ENCODE measurements at regions of chr2 and their contacts with region 1.

Region 1: GRCh38 chr2:218269899-218270720 is at the starts of genes AAMP and PNKD:
- DNase-seq: peak; percentile 100
- ATAC-seq: peak; percentile 92
- H3K4me3 Mint-ChIP-seq: peak within 1 kb of the TSS; percentile 82
- H3K27ac Mint-ChIP-seq: peak within 1 kb of the TSS; percentile 88
- H3K4me1 Mint-ChIP-seq: peaks cover 39% of the 10 kb centered on the region
- H3K27me3 Mint-ChIP-seq: no peaks in the 10 kb centered on the region
- total RNA-seq, gene AAMP: 49.5 to 61.4 TPM
- total RNA-seq, gene PNKD: 37.6 to 40.7 TPM

Region 2: DNA sequence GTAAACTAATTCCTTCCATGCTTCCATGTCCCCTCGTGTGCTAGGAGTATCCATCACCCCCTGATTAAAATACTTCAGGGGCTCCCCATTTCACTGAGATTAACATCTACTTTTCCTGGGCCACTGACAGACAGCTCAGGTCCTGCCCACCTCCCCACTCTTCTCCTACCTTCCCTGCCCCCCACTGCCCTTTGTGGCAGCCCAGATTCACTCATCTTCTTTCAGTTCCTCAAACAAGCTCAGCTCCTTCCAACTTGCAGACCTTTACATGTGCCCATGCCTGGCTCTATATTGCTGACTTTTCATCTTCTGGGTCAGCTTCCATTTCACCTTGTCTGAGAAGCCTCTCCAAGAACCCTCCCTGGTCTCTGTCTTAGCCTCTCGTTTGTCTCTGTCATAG is 189.0 kb before region 1 on chr2:
- CTCF ChIA-PET with region 1: no interaction called
- DNase-seq: no peak
- ATAC-seq: no peak
- H3K4me3 Mint-ChIP-seq: no peak overlapping the region
- H3K27ac Mint-ChIP-seq: no peak overlapping the region
- H3K4me1 Mint-ChIP-seq: peaks cover 2% of the 10 kb centered on the region
- H3K27me3 Mint-ChIP-seq: peaks cover 7% of the 10 kb centered on the region

Region 3: DNA sequence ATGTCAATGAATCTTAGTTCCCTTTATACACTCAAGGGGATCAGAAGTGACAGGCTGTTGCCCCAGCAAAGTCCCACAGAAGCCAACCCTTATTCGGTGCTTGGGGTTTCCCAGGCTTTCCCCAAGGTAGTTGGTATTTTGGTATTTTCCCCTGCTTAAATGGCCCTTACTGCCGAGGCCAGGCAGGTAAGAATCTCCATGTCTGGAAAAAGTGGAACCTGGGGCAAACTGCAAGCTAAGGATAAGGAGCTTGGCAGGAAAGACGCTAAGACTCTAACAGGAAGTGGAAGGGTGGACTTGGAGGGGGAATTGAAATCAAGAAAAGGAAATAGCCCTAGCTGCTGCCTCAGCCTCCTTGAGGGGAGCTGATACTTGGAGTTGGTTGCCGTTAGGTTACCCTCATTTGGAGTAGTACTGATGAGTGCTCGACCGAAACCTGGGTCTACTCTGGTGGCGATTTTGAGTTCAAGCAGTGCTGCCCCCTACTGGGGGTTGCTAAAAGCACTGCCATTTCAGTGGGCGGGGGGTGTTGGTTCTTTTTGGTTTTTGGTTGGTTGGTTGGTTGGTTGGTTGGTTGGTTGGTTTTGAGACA is 12.6 kb before region 1 on chr2:
- CTCF ChIA-PET with region 1: interaction called, 21 read pairs
- DNase-seq: peak; percentile 81
- ATAC-seq: peak; percentile 80
- H3K4me3 Mint-ChIP-seq: peak overlapping the region; percentile 8
- H3K27ac Mint-ChIP-seq: peak overlapping the region; percentile 86
- H3K4me1 Mint-ChIP-seq: peaks cover 20% of the 10 kb centered on the region
- H3K27me3 Mint-ChIP-seq: no peaks in the 10 kb centered on the region

Region 4: DNA sequence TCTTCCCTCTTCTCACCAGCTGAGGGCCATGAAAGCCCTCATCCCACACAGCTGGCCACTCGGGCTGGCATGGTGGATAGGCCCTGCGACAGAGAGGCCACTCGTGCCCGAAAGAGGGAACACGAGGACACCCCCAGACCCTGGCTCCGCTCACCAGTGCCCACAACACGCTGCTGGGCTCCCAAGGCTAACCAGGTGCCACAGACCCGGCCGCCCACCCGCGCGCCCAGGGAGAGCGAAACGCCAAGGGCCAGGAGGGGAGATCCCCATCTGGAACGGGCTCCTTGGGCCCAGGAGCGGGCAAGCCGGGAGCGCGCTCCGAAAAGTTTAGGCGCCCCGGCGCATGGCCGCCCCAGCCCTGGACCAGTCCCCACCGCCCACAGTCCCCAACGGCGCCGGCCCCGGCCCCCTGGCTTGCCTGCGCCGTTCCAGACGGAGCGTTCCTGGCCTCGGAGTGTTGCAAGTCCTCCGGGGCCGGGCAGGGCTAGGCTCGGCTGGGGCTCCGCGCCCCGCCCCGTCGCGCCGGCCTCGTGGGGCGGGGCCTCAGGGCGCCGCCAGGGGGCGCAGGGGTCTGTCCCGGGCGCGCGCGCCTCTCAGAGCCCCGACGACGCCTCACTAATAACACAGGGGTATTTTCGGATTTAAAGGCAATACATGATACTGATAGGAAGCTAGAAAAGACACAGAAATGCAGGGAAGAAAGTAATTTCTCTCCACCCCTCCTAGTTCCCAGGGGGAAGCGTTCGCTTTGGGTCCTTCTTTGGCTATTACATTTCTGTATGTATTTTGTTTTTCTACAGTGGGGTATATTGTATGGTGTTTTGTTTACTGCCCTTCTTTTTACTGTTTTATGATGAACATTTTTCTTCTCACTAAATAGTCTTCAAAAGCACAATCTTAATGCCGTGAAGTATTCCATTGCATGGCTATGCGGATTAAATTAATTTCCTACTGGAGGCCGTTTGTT is 22.2 kb after region 1 on chr2 and contains the start of gene TMBIM1:
- CTCF ChIA-PET with region 1: interaction called, 243 read pairs
- DNase-seq: peak; percentile 80
- ATAC-seq: peak; percentile 91
- H3K4me3 Mint-ChIP-seq: peak within 1 kb of the TSS; percentile 86
- H3K27ac Mint-ChIP-seq: peak within 1 kb of the TSS; percentile 91
- H3K4me1 Mint-ChIP-seq: peaks cover 61% of the 10 kb centered on the region
- H3K27me3 Mint-ChIP-seq: no peaks in the 10 kb centered on the region
- total RNA-seq, gene TMBIM1: 51.5 to 72.4 TPM

Region 5: GRCh38 chr2:218301176-218301819 is 31.2 kb after region 1 on chr2:
- CTCF ChIA-PET with region 1: interaction called, 243 read pairs
- DNase-seq: peak; percentile 94
- ATAC-seq: peak; percentile 96
- H3K4me3 Mint-ChIP-seq: no peak overlapping the region
- H3K27ac Mint-ChIP-seq: peak overlapping the region; percentile 76
- H3K4me1 Mint-ChIP-seq: peaks cover 8% of the 10 kb centered on the region
- H3K27me3 Mint-ChIP-seq: no peaks in the 10 kb centered on the region

Region 6: GRCh38 chr2:218360447-218360846 is 90.3 kb after region 1 on chr2:
- CTCF ChIA-PET with region 1: interaction called, 29 read pairs
- DNase-seq: no peak
- ATAC-seq: no peak
- H3K4me3 Mint-ChIP-seq: no peak overlapping the region
- H3K27ac Mint-ChIP-seq: no peak overlapping the region
- H3K4me1 Mint-ChIP-seq: peaks cover 6% of the 10 kb centered on the region
- H3K27me3 Mint-ChIP-seq: no peaks in the 10 kb centered on the region

Region 7: GRCh38 chr2:218395797-218396687 is 125.9 kb after region 1 on chr2:
- CTCF ChIA-PET with region 1: interaction called, 10 read pairs
- DNase-seq: peak; percentile 97
- ATAC-seq: peak; percentile 66
- H3K4me3 Mint-ChIP-seq: peak overlapping the region; percentile 87
- H3K27ac Mint-ChIP-seq: peak overlapping the region; percentile 94
- H3K4me1 Mint-ChIP-seq: peaks cover 34% of the 10 kb centered on the region
- H3K27me3 Mint-ChIP-seq: no peaks in the 10 kb centered on the region